AG04450 (cell line): ENCODE measurements at regions of chr1 and their contacts with region 1.

Region 1: GRCh38 chr1:239951511-239952140 is 140.1 kb upstream of the FMN2 start:
- DNase-seq: peak; percentile 34
- H3K4me3 ChIP-seq: no peak overlapping the region
- H3K27ac ChIP-seq: no peak overlapping the region
- H3K27me3 ChIP-seq: peaks cover 2% of the 10 kb centered on the region
- CTCF ChIP-seq: peak; percentile 77

Region 2: GRCh38 chr1:239939602-239940001 is 12.0 kb before region 1 on chr1:
- CTCF ChIA-PET with region 1: interaction called, 15 read pairs
- POLR2A ChIA-PET with region 1: no interaction called
- DNase-seq: no peak
- H3K4me3 ChIP-seq: no peak overlapping the region
- H3K27ac ChIP-seq: no peak overlapping the region
- H3K27me3 ChIP-seq: no peaks in the 10 kb centered on the region
- CTCF ChIP-seq: no peak

Region 3: GRCh38 chr1:239963856-239964255 is 12.2 kb after region 1 on chr1:
- CTCF ChIA-PET with region 1: interaction called, 12 read pairs
- POLR2A ChIA-PET with region 1: no interaction called
- DNase-seq: no peak
- H3K4me3 ChIP-seq: no peak overlapping the region
- H3K27ac ChIP-seq: no peak overlapping the region
- H3K27me3 ChIP-seq: peaks cover 2% of the 10 kb centered on the region
- CTCF ChIP-seq: no peak

Region 4: DNA sequence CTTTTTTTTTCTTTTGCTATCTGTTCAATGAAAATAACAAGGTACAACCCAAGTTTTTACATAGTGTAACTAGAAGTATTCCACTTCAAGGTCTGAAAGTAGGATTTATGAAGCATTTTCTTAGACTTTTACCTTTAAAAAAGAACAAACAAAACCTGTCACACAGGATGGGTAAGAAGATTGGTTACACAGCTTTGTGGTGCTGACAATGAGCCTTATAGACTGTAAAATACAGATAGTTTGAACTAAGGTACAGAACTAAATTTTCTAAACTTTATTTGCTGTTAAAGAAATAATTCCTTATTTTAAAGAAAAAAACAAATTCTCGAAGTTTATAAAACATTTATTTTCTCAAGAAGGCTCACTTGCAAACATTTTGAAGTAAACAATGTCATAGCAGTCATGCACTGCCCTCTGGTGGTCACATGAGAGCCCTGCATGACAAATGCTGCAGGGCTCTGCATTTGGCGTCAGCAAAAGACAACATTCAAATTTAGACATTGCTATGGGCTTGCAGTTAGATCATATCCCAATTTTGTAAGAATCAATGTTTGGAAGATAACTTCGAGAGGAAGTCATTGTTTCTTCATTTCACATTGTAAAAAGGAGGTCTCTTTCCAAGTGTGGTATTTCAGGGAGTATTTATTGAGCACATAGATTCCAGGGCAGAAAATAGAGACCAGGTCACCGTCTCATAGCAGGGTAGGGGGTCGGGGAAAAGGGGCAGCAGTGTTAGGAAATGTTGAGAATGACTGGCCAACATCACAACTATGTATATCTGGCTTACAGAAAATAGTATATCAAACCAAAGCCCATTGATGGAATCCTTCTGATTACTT is 24.7 kb after region 1 on chr1:
- CTCF ChIA-PET with region 1: interaction called, 54 read pairs
- POLR2A ChIA-PET with region 1: no interaction called
- DNase-seq: peak; percentile 13
- H3K4me3 ChIP-seq: no peak overlapping the region
- H3K27ac ChIP-seq: no peak overlapping the region
- H3K27me3 ChIP-seq: no peaks in the 10 kb centered on the region
- CTCF ChIP-seq: peak; percentile 97

Region 5: GRCh38 chr1:239987103-239987745 is 35.6 kb after region 1 on chr1:
- CTCF ChIA-PET with region 1: interaction called, 66 read pairs
- POLR2A ChIA-PET with region 1: no interaction called
- DNase-seq: peak; percentile 10
- H3K4me3 ChIP-seq: no peak overlapping the region
- H3K27ac ChIP-seq: no peak overlapping the region
- H3K27me3 ChIP-seq: peaks cover 4% of the 10 kb centered on the region
- CTCF ChIP-seq: peak; percentile 79

Region 6: DNA sequence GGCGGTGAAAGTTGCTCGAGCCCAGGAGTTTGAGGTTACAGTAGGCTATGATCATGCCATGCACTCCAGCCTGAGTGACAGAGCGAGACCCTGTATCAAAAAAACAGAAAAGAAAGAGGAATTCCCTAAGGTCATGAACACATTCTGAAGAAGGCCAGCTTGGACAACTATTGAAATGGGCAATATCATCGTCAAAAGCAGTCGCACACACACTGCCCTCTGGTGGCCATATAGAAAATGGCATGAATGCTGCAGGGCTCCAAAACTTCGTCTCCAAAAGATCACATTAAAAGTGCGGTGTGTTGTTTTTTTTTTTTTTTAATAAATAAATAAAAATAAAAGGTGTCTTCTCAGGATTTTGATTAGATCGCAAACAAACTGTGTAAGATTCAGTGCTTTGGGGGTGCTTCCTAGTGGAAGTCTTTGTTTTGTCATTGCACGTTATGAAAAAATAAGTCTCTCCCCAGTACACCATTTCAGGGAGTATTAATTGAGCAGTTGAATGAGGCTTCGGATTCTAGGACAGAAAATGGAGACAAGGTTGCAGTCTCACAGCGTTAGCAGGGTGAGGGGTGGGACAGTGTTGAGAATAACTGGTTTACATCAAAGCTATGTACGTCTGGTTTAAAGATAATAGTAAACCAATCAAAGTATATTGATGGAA is 52.6 kb after region 1 on chr1:
- CTCF ChIA-PET with region 1: interaction called, 38 read pairs
- POLR2A ChIA-PET with region 1: no interaction called
- DNase-seq: no peak
- H3K4me3 ChIP-seq: no peak overlapping the region
- H3K27ac ChIP-seq: no peak overlapping the region
- H3K27me3 ChIP-seq: peaks cover 2% of the 10 kb centered on the region
- CTCF ChIP-seq: peak; percentile 85